Activated T-helper 2 cell treated with anti-CD3 and anti-CD28 coated beads, Interferon-gamma antibody, Interleukin-2, Interleukin-4, amounts not matched to agents 10 μg/mL and 5 μg/mL and 100 μg/mL, durations not matched to agents 14 hours and 24 hours and 36 hours (primary cell): ENCODE measurements at regions of chr19 and their contacts with region 1.

Region 1: DNA sequence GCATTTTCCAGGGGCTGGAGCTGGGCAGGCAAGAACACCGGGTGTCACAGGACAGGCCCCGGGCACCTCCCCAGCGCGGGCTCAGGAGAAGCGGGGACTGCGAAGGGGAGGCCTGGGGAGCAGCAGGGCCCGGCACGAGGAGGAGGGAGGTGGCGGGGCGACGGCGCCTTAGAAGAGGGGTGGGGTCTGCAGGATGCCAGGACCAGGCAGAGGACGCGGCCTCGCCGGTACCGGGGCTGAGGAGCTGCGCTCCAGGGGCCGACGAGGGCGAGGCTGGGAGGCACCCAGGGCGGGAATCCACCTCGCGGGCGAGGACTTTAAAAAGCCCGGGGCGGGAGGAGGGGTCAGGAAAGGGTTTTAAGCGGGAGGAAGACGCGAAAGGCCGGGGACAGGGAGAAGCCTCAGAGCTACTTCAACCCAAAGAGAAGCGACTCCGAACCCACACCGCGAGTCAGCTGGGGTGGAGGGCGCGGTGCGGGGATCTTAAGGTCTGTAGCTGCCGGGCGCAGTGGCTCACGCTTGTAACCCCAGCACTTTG is 665 bp downstream of the ZNF347 start:
- DNase-seq: peak; percentile 9
- H3K4me3 Mint-ChIP-seq: peak overlapping the region; percentile 81
- H3K27ac Mint-ChIP-seq: peak overlapping the region; percentile 46
- H3K4me1 Mint-ChIP-seq: peaks cover 10% of the 10 kb centered on the region
- H3K27me3 Mint-ChIP-seq: no peaks in the 10 kb centered on the region

Region 2: GRCh38 chr19:53103198-53103944 is 54.8 kb before region 1 on chr19 and contains the start of gene ZNF160:
- intact Hi-C with region 1: loop called (anchors 2 kb)
- DNase-seq: peak; percentile 99
- H3K4me3 Mint-ChIP-seq: peak within 1 kb of the TSS; percentile 87
- H3K27ac Mint-ChIP-seq: peak within 1 kb of the TSS; percentile 84
- H3K4me1 Mint-ChIP-seq: peaks cover 19% of the 10 kb centered on the region
- H3K27me3 Mint-ChIP-seq: no peaks in the 10 kb centered on the region
- total RNA-seq, gene ZNF160: 35.3 and 39.3 TPM in 2 replicates